ENCODE measurements at regions of chr10 and their contacts with region 1.

Region 1: DNA sequence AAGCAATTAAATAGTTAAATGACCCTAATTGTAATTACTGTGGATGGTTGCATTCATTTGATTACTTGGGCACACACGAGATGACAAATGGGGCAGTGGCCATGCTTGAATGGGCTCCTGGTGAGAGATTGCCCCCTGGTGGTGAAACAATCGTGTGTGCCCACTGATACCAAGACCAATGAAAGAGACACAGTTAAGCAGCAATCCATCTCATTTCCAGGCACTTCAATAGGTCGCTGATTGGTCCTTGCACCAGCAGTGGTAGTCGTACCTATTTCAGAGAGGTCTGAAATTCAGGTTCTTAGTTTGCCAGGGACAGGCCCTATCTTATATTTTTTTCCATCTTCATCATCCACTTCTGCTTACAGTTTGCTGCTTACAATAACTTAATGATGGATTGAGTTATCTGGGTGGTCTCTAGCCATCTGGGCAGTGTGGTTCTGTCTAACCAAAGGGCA is 8.3 kb downstream of the PCBD1 start:
- DNase-seq: peak; percentile 70 to 77 (median 75)
- ATAC-seq: peak; percentile 34 to 80 (median 76)
- H3K4me3 ChIP-seq: no peak overlapping the region
- H3K27ac ChIP-seq: no peak overlapping the region
- H3K4me1 ChIP-seq: peaks cover 0 to 16% (median 0%) of the 10 kb centered on the region in 12 donors
- H3K27me3 ChIP-seq: no peaks in the 10 kb centered on the region
- CTCF ChIP-seq: peak; percentile 82 to 95 (median 92)
- POLR2A ChIP-seq: no peak

Region 2: DNA sequence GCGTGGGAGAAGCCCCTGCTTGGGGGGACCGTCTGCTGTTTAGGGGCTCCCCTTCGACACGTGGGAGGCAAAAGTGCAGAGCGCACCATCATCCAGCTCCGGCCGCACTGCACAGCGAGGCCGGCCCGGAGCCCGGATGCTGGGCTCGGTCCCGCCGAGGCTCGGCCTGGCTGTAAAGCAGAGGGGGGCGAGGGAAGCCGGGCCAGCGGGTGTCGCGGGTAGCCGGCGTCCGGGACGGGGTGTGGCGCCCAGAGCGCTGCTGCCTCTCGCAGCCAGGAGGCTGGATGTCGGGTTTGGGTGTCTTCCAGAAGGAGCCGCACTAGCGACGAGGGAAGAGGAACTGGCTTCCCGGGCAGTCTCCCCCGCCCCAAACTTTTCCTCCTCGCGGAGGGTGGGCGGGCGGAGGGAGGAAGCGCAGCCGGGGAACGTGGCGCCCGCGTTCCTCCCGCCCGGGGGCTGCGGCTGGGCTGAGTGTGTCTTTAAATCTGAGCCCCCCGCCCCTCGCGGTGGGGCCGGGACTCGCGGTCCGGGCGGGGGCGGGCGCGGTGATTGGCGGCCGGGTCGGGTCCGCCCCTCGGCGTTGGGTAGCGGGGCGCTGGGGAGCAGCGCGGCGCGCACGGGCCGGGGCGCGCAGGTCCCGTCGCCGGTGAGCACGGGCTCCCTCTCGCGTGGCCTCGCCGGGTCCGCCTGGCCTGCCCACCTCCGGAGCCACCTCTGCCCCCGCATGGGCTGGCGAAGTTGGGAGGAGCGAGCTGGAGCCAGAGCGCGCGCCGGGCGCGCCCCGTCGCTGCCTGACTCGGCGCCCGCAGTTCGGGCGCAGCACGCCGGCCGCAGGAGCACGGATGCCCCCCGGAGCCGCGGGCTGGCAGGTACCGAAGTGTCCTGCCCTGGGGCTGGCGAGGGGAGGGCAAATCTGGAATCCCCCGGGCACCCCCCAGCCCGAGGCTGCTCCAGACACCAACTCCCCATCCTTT is 401.6 kb before region 1 on chr10 and contains the start of gene PALD1:
- intact Hi-C with region 1: loop called in 1 of 10 experiments (anchors 10 kb)
- DNase-seq: peak; percentile 85 to 89 (median 87)
- ATAC-seq: peak; percentile 26 to 68 (median 61)
- H3K4me3 ChIP-seq: peak within 1 kb of the TSS; percentile 56 to 84 (median 66)
- H3K27ac ChIP-seq: peak within 1 kb of the TSS; percentile 61 to 89 (median 76)
- H3K4me1 ChIP-seq: peaks cover 12 to 63% (median 52%) of the 10 kb centered on the region in 12 donors
- H3K27me3 ChIP-seq: peaks cover 0 to 2% (median 0%) of the 10 kb centered on the region in 9 donors
- CTCF ChIP-seq: peak in 9 of 12 donors; percentile 23 to 60 (median 40)
- POLR2A ChIP-seq: peak in 1 of 2 donors; percentile 23
- total RNA-seq, gene PALD1: 3.2 to 12.3 (median 6.7) TPM

Region 3: GRCh38 chr10:70758757-70759514 is 121.2 kb before region 1 on chr10:
- intact Hi-C with region 1: loop called in 6 of 10 experiments (anchors 2 to 5 kb)
- DNase-seq: peak; percentile 59 to 77 (median 73)
- ATAC-seq: peak; percentile 27 to 80 (median 53)
- H3K4me3 ChIP-seq: no peak overlapping the region
- H3K27ac ChIP-seq: no peak overlapping the region
- H3K4me1 ChIP-seq: peaks cover 0 to 19% (median 2%) of the 10 kb centered on the region in 12 donors
- H3K27me3 ChIP-seq: no peaks in the 10 kb centered on the region
- CTCF ChIP-seq: peak; percentile 65 to 87 (median 76)
- POLR2A ChIP-seq: no peak

Region 4: GRCh38 chr10:70815504-70816219 is 64.4 kb before region 1 on chr10 and contains the start of gene SGPL1:
- intact Hi-C with region 1: loop called (anchors 1 to 2 kb)
- DNase-seq: peak; percentile 81 to 93 (median 88)
- ATAC-seq: peak; percentile 87 to 98 (median 97)
- H3K4me3 ChIP-seq: peak within 1 kb of the TSS; percentile 58 to 96 (median 80)
- H3K27ac ChIP-seq: peak within 1 kb of the TSS; percentile 67 to 95 (median 86)
- H3K4me1 ChIP-seq: peaks cover 0 to 25% (median 11%) of the 10 kb centered on the region in 12 donors
- H3K27me3 ChIP-seq: no peaks in the 10 kb centered on the region
- CTCF ChIP-seq: peak; percentile 81 to 99 (median 98)
- POLR2A ChIP-seq: peak in 1 of 2 donors; percentile 70
- total RNA-seq, gene SGPL1: 9.0 to 32.3 (median 12.2) TPM

Region 5: DNA sequence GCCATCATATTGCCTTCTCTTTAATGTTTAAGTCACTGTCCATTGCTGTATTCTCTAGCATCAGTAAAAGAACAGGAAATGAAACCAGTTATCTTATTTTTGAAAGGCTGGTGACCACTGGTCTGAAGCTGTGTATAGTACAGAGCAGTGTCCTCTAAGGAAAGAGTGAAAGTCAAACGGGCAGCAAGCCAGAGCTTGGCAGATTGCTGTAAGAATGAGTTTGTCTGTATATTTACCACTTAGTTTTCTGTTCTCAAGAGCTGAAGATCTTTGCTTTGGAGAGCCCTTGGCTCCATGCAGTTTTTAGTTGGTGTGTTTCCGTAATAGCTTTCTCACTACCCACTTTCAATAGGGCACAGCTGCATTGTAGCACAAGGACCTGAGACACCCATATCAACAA is 23.7 kb before region 1 on chr10:
- intact Hi-C with region 1: no loop called
- DNase-seq: no peak
- ATAC-seq: no peak
- H3K4me3 ChIP-seq: no peak overlapping the region
- H3K27ac ChIP-seq: no peak overlapping the region
- H3K4me1 ChIP-seq: peaks cover 0 to 6% (median 0%) of the 10 kb centered on the region in 12 donors
- H3K27me3 ChIP-seq: no peaks in the 10 kb centered on the region
- CTCF ChIP-seq: no peak
- POLR2A ChIP-seq: no peak

Measured in heart left ventricle (tissue), 16 donors.